ENCODE measurements at regions of chr4 and their contacts with region 1.

Region 1: DNA sequence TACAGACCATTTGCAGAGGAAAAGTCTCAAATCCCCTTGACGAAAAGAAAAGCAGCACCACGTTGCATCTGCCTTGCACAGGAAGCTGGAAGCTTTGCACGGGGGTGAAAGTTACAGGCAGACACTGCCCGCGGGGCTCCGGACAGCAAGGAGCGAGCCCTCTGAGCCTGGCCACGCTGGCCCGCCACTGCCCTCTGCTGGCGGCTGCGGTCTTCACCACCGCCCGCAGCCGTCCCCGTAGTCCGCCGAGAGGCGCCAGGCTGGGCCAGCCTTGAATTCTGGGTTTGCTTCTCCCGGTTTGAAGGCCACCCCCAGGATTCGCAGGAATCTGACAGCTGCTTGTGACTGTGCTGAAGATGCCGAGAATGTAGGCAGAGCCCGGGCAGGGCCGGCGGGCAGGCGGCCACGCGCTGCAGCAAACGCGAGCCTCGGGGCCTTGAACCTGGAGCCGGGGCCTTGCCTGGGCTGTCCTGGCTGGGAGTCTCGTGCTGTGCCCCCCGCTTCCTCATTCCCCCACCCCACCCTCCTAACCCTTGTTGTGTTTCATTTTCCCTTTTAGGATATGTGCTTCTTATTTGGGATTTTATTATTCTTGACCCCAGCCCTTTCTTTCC is 49.2 kb downstream of the ENPP6 start:
- DNase-seq: peak; percentile 83
- H3K4me3 ChIP-seq: no peak overlapping the region
- H3K27ac ChIP-seq: no peak overlapping the region
- H3K4me1 ChIP-seq: peaks cover 0 to 8% (median 7%) of the 10 kb centered on the region in 4 donors
- H3K27me3 ChIP-seq: peaks cover 0 to 13% (median 6%) of the 10 kb centered on the region in 3 donors
- CTCF ChIP-seq: peak; percentile 60 to 96 (median 79)
- EP300 ChIP-seq: no peak
- POLR2A ChIP-seq: no peak

Region 2: GRCh38 chr4:183840311-183840710 is 328.2 kb before region 1 on chr4:
- intact Hi-C with region 1: loop called (anchors 1 kb)
- DNase-seq: peak; percentile 83
- H3K4me3 ChIP-seq: no peak overlapping the region
- H3K27ac ChIP-seq: no peak overlapping the region
- H3K4me1 ChIP-seq: peaks cover 0 to 8% (median 3%) of the 10 kb centered on the region in 4 donors
- H3K27me3 ChIP-seq: no peaks in the 10 kb centered on the region
- CTCF ChIP-seq: peak; percentile 71 to 91 (median 81)
- EP300 ChIP-seq: no peak
- POLR2A ChIP-seq: no peak

Region 3: DNA sequence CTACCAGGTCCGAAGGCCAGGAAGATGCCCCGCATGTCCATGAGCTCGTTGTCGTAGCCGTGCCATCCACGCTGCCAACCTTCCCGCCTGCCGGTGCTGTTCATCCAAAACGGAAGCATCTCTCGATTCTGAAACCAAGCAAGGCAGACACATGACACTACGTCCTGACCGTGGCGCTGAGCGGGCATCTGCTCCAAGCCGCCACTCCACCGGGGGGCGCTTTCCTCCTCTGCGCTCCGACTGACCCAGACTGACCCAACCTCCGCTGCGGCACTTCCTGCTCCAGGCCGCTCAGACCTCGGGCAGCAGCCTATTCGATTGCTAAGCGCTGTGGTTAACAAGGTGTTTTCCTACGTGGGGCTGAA is 71.3 kb before region 1 on chr4:
- intact Hi-C with region 1: loop called (anchors 2 kb)
- DNase-seq: peak; percentile 81
- H3K4me3 ChIP-seq: peak overlapping the region in 3 of 4 donors; percentile 30 to 37 (median 33)
- H3K27ac ChIP-seq: peak overlapping the region in 2 of 4 donors; percentile 0 to 29
- H3K4me1 ChIP-seq: peaks cover 0 to 26% (median 20%) of the 10 kb centered on the region in 4 donors
- H3K27me3 ChIP-seq: no peaks in the 10 kb centered on the region
- CTCF ChIP-seq: peak in 3 of 4 experiments; percentile 11 to 22 (median 20)
- EP300 ChIP-seq: no peak
- POLR2A ChIP-seq: no peak

Measured in sigmoid colon (tissue), 7 donors.